Thyroid gland (tissue), 4 donors: ENCODE measurements at regions of chr18 and their contacts with region 1.

Region 1: DNA sequence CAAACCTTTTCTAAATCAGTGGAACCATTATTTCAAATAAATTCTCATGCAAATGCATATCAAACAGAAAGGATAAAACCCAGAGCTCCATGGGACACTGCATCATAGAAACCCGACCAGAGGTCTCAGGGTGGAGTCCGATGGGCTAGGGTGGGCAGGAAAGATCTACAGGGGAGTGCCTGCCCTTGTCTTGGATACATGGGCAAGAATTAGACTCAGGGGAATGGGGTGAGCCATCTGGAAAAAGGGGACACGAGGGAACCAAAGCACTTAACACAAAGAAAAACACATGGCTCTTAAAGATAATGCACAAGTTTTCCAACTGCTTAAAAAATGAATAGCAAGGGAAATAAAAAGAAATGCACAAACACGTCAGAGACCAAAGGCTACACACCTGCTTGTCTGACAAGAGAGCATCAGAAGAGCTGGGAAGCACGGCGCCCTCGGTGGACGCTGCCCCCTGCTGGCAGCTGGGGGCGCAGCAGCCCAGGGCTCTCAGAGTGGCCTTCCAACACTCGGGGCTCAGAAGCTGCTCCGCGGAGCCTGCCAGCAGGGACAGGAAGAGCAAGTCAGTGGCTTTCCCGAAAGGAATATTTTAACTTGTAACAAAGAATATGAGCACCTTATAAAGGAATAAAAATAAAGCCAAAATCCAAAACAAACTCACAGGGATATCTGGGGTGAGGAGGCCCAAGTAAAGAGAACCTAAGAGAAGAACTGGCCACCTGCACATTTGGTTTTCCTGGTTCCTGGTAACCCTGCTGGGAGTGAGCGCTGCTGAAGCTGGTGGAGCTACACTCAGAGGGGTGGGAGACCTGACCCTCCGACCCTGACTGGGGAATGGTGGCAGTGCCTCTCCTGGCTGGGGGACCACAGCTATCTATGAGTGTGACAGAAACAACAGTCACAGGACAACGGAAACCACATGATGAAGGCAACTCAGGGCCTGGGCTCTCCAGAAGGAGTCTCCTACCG is 54.5 kb downstream of the SIGLEC15 start:
- DNase-seq: peak; percentile 65 to 74
- H3K4me3 ChIP-seq: no peak overlapping the region
- H3K27ac ChIP-seq: no peak overlapping the region
- H3K4me1 ChIP-seq: peaks cover 0 to 4% of the 10 kb centered on the region in 2 donors
- H3K27me3 ChIP-seq: no peaks in the 10 kb centered on the region
- CTCF ChIP-seq: peak; percentile 80 to 97 (median 90)
- POLR2A ChIP-seq: no peak

Region 2: GRCh38 chr18:45664824-45665763 is 214.9 kb before region 1 on chr18:
- intact Hi-C with region 1: loop called (anchors 10 kb)
- DNase-seq: peak; percentile 75 to 77
- H3K4me3 ChIP-seq: no peak overlapping the region
- H3K27ac ChIP-seq: peak overlapping the region in 1 of 3 donors; percentile 29
- H3K4me1 ChIP-seq: peaks cover 3 to 46% of the 10 kb centered on the region in 2 donors
- H3K27me3 ChIP-seq: no peaks in the 10 kb centered on the region
- CTCF ChIP-seq: peak; percentile 88 to 98 (median 92)
- POLR2A ChIP-seq: no peak